Activated CD4-positive, alpha-beta memory T cell treated with anti-CD3 and anti-CD28 coated beads, Interleukin-2, amount 10 ng/mL, durations not matched to agents 7 days and 5 days (primary cell): ENCODE measurements at regions of chr16 and their contacts with region 1.

Region 1: GRCh38 chr16:57519796-57520360 is 16.5 kb downstream of the CCDC102A start:
- DNase-seq: peak; percentile 81
- H3K4me3 Mint-ChIP-seq: no peak overlapping the region
- H3K27ac Mint-ChIP-seq: no peak overlapping the region
- H3K4me1 Mint-ChIP-seq: peaks cover 17% of the 10 kb centered on the region
- H3K27me3 Mint-ChIP-seq: no peaks in the 10 kb centered on the region

Region 2: GRCh38 chr16:57300387-57301125 is 219.3 kb before region 1 on chr16:
- CTCF ChIA-PET with region 1: interaction called, 17 read pairs
- POLR2A ChIA-PET with region 1: interaction called, 7 read pairs
- DNase-seq: peak; percentile 99
- H3K4me3 Mint-ChIP-seq: no peak overlapping the region
- H3K27ac Mint-ChIP-seq: no peak overlapping the region
- H3K4me1 Mint-ChIP-seq: peaks cover 26% of the 10 kb centered on the region
- H3K27me3 Mint-ChIP-seq: no peaks in the 10 kb centered on the region

Region 3: GRCh38 chr16:57409870-57410585 is 109.8 kb before region 1 on chr16:
- CTCF ChIA-PET with region 1: no interaction called
- POLR2A ChIA-PET with region 1: no interaction called
- DNase-seq: no peak
- H3K4me3 Mint-ChIP-seq: no peak overlapping the region
- H3K27ac Mint-ChIP-seq: no peak overlapping the region
- H3K4me1 Mint-ChIP-seq: no peaks in the 10 kb centered on the region
- H3K27me3 Mint-ChIP-seq: peaks cover 4% of the 10 kb centered on the region

Region 4: GRCh38 chr16:57447186-57447962 is 72.5 kb before region 1 on chr16 and contains the starts of genes CIAPIN1 and COQ9:
- CTCF ChIA-PET with region 1: interaction called, 11 read pairs
- POLR2A ChIA-PET with region 1: interaction called, 5 read pairs
- DNase-seq: peak; percentile 95
- H3K4me3 Mint-ChIP-seq: peak within 1 kb of the TSS; percentile 91
- H3K27ac Mint-ChIP-seq: peak within 1 kb of the TSS; percentile 83
- H3K4me1 Mint-ChIP-seq: peaks cover 33% of the 10 kb centered on the region
- H3K27me3 Mint-ChIP-seq: no peaks in the 10 kb centered on the region
- total RNA-seq, gene CIAPIN1: 35.8 to 36.1 TPM
- total RNA-seq, gene COQ9: 28.5 to 29.0 TPM

Region 5: DNA sequence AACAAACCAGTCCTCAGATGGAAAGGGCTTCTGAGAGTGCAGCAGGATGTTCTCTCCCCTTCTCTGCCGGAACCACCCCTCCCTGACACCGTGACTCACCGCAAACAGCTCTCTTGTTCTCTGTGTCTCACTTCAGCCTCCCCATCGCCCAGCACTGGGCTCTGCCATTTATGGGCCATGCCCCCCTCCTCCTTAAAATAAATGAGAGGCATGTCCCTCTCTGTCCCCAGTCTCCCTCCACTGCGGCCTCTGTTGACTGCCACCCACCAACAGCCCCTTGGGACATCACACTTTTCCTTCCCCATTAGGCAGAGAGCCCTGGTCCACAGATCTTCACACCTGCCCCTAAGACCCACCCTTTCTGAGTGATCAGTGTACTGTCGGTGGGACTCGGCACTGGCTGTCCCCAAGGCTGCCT is 10.2 kb after region 1 on chr16:
- CTCF ChIA-PET with region 1: interaction called, 27 read pairs
- POLR2A ChIA-PET with region 1: interaction called, 4 read pairs
- DNase-seq: peak; percentile 85
- H3K4me3 Mint-ChIP-seq: peak overlapping the region; percentile 60
- H3K27ac Mint-ChIP-seq: peak overlapping the region; percentile 99
- H3K4me1 Mint-ChIP-seq: peaks cover 63% of the 10 kb centered on the region
- H3K27me3 Mint-ChIP-seq: no peaks in the 10 kb centered on the region

Region 6: GRCh38 chr16:57540906-57541753 is 21.3 kb after region 1 on chr16:
- CTCF ChIA-PET with region 1: interaction called, 11 read pairs
- POLR2A ChIA-PET with region 1: interaction called, 6 read pairs
- DNase-seq: peak; percentile 15
- H3K4me3 Mint-ChIP-seq: no peak overlapping the region
- H3K27ac Mint-ChIP-seq: peak overlapping the region; percentile 75
- H3K4me1 Mint-ChIP-seq: peaks cover 74% of the 10 kb centered on the region
- H3K27me3 Mint-ChIP-seq: no peaks in the 10 kb centered on the region

Region 7: DNA sequence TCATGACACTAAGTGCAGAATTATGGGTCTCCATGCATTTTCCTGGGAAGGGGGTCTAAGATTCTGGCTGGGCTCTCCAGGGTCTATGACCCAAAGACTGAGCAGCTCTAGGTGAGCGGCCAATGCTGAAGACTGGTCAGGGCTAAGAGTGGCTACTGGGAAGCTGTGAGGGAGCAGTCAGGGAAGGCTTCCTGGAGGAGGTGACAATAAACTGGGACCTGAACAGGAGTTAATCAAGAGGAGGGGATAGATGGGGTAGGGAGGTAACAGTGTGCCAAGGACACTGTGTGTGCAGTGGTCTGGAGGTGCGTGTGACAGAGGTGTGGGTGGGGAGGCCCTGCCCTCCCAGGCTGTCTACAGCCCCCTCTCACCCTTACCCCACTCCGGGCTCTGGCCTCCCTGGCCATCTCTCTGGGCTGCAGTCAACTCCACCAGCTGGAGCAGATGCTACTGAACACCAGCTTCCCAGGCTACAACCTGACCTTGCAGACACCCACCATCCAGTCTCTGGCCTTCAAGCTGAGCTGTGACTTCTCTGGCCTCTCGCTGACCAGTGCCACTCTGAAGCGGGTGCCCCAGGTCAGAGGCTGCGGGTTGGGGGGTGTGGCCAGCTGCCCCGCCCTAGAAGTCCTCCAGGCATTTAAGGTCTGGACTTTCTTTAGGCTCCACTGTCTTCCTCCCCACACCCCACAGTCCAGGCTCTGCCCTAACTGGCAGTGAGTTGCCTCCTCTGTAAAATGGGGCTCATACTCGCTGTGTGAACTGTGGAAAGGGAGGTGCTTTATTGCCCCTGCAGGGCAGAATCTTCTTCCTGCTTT is 43.0 kb after region 1 on chr16:
- CTCF ChIA-PET with region 1: no interaction called
- POLR2A ChIA-PET with region 1: no interaction called
- DNase-seq: no peak
- H3K4me3 Mint-ChIP-seq: no peak overlapping the region
- H3K27ac Mint-ChIP-seq: no peak overlapping the region
- H3K4me1 Mint-ChIP-seq: peaks cover 5% of the 10 kb centered on the region
- H3K27me3 Mint-ChIP-seq: no peaks in the 10 kb centered on the region